ENCODE measurements at regions of chr1 and their contacts with region 1.

Region 1: DNA sequence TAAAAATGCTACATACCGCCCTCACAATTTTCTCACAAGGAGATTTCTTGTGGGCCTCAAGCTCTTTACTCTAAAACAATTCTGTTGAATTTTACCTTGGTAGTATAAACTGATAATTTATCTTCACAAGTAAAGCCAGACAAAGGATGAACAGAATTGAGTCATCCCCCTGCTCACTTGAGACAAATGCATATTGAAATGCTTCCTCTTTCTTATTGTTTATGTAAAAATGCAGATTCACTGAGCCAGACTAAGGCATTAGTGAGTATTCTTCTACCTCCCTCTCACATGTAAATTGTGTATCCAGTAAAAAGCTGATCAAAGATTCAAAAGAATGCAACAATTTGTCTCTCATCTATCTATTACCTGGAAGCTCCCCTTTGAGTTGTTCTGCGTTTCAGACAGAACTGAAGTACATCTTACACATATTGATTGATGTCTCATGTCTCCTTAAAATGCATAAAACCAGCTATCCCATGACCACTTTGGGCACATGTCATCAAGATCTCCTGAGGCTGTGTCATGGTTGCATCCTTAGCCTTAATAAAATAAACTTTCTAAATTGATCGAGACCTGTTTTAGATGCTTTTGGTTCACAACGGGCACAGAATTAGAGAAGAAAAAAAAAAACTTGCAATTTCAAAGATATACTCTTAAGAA is 743.1 kb upstream of the B3GALT2 start:
- DNase-seq: no peak
- ATAC-seq: no peak
- H3K4me3 ChIP-seq: no peak overlapping the region
- H3K27ac ChIP-seq: no peak overlapping the region
- H3K4me1 ChIP-seq: no peaks in the 10 kb centered on the region
- H3K27me3 ChIP-seq: no peaks in the 10 kb centered on the region

Region 2: DNA sequence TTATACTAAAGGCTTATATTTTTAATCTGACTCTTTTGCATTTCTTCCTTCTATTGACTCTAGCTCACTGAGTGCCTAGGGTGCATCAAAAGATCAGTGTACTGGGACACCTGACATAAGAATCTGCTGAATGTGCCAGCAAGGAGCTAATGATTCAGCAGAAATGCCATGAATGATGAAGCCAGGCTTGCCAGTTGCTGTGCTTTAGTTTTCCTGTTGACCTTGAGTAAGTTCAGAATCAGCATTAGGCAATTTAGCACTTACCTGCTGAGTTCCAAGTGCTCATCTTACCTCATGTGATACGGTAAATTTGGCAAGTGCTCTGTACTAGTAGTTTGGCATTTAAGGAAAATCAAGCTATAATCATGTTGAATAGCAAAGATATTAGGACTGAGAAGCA is 219.9 kb before region 1 on chr1:
- intact Hi-C with region 1: loop called in 1 of 4 experiments (anchors 10 kb)
- DNase-seq: no peak
- ATAC-seq: no peak
- H3K4me3 ChIP-seq: no peak overlapping the region
- H3K27ac ChIP-seq: no peak overlapping the region
- H3K4me1 ChIP-seq: no peaks in the 10 kb centered on the region
- H3K27me3 ChIP-seq: no peaks in the 10 kb centered on the region

Region 3: DNA sequence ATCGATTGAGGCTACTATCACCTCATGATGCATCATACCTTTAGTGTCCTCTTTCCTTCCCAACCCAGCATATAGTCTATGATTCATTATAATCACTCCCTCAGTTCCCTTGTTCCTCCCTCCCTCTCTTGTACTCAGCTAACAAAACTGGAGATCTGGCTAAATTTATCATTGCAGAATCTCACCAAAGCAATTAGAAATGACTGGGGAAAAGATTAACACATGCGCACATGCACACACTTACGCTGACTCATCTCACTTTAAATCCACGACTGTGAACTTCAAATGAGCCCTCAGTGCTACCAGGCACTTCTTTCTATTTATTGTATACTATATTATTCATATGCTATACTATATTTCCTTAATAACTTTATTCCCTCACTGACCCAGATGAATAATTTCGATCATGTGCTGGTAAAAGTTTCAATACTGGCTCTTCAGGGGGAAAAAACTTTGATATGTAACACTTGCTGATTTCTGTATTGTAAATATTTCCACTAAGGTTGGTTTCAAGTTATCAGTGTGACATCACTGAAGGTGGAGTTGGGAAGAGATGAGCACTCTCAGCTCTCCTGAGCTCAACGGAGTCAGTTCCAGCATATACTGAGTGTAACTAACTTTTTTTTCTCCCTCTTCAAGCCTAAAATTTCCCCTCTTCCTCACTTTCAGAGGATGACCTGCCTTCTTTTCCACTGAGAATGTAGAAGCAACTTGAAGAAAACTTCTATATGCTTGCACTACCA is 129.4 kb before region 1 on chr1:
- intact Hi-C with region 1: no loop called
- DNase-seq: no peak
- ATAC-seq: no peak
- H3K4me3 ChIP-seq: no peak overlapping the region
- H3K27ac ChIP-seq: no peak overlapping the region
- H3K4me1 ChIP-seq: no peaks in the 10 kb centered on the region
- H3K27me3 ChIP-seq: no peaks in the 10 kb centered on the region

Region 4: DNA sequence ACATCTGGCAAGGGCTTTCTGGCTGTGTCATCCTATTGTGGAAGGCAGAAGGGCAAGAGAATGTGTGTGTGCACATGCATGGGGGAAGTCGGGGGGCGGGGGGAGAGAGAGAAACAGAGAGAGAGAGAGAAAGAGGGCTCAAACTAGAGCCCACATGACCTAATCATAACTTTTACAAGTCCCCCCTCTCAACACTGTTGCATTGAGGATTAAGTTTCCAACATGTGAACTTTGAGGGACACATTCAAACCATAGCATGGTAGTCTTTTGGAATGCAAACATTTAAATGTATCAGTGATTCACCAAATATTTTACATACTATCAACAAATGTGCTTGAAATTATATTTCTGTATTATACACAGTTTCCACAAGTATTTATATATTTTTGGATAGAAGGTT is 87.6 kb before region 1 on chr1:
- intact Hi-C with region 1: no loop called
- DNase-seq: no peak
- ATAC-seq: no peak
- H3K4me3 ChIP-seq: no peak overlapping the region
- H3K27ac ChIP-seq: no peak overlapping the region
- H3K4me1 ChIP-seq: no peaks in the 10 kb centered on the region
- H3K27me3 ChIP-seq: no peaks in the 10 kb centered on the region

Region 5: GRCh38 chr1:194419721-194420120 is 490.2 kb after region 1 on chr1:
- intact Hi-C with region 1: no loop called
- DNase-seq: no peak
- ATAC-seq: no peak
- H3K4me3 ChIP-seq: no peak overlapping the region
- H3K27ac ChIP-seq: no peak overlapping the region
- H3K4me1 ChIP-seq: no peaks in the 10 kb centered on the region
- H3K27me3 ChIP-seq: no peaks in the 10 kb centered on the region

Measured in right cardiac atrium (tissue), 5 donors.